ENCODE measurements at regions of chr18 and their contacts with region 1.

Region 1: GRCh38 chr18:22933206-22933957 is at the start of gene RBBP8:
- DNase-seq: peak; percentile 97
- H3K4me3 Mint-ChIP-seq: peak within 1 kb of the TSS; percentile 89
- H3K27ac Mint-ChIP-seq: peak within 1 kb of the TSS; percentile 96
- H3K4me1 Mint-ChIP-seq: peaks cover 21% of the 10 kb centered on the region
- H3K27me3 Mint-ChIP-seq: peaks cover 3% of the 10 kb centered on the region
- total RNA-seq, gene RBBP8: 97.8 TPM in 2 replicates

Region 2: DNA sequence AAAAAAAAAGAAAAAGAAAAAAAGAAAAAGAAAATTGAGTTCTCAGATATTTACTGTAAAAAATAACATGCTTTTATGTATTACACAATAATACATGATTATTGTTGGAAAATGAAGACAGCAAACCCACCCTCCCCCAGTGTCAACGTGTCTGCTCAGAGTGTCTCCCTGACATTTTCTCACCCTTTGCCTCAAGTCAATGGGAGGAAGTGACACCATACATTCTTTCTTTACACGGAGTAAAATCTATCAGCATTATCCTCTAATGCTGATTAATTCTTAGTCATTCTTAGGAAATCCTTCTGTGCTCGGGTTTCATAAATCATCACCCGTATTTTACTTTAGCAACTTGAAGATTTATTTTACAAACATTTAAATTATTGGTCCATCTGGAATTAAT is 547.7 kb before region 1 on chr18:
- intact Hi-C with region 1: no loop called
- DNase-seq: no peak
- H3K4me3 Mint-ChIP-seq: no peak overlapping the region
- H3K27ac Mint-ChIP-seq: no peak overlapping the region
- H3K4me1 Mint-ChIP-seq: no peaks in the 10 kb centered on the region
- H3K27me3 Mint-ChIP-seq: no peaks in the 10 kb centered on the region

Region 3: DNA sequence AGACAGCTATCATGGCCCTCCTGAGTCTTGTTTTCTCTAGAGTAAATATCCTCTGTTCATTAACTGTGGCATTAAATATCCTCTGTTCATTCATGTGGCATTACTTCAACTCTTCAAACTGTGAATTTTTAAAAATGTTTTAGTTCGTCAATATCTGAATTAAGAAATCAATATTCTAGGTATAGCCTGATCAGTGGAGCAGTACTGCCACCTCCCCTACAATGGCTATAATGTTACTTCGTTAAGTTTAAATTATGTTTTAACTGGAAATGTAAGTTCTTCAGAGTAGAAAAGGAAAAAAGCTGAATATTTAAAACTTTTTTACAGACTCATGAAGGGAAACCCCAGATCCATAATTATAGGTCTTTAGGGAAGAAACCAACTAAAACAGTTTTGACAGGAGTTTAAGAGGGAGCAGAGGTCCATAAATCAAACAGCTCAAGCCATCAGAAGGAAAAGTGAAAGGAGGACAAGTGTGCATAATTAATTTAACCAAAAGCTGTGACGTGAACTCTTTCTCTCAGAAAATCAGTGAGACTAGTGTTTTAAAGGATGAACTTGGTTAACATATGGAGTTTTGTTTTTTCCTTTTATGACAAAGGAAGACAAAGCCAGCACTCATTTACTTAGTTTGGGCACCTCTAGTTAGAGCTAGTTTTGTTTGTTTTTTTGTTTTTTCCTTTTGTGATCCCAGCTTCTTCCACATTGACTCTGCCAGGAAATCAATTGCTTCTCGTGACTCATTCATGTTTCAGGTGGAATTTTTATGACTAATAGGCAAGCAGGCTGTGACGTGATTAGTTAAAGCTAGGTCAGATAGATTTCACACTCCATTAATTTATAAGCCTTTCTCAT is 44.7 kb after region 1 on chr18:
- intact Hi-C with region 1: loop called (anchors 1 kb)
- DNase-seq: no peak
- H3K4me3 Mint-ChIP-seq: peak overlapping the region; percentile 0
- H3K27ac Mint-ChIP-seq: peak overlapping the region; percentile 61
- H3K4me1 Mint-ChIP-seq: peaks cover 20% of the 10 kb centered on the region
- H3K27me3 Mint-ChIP-seq: no peaks in the 10 kb centered on the region

Region 4: DNA sequence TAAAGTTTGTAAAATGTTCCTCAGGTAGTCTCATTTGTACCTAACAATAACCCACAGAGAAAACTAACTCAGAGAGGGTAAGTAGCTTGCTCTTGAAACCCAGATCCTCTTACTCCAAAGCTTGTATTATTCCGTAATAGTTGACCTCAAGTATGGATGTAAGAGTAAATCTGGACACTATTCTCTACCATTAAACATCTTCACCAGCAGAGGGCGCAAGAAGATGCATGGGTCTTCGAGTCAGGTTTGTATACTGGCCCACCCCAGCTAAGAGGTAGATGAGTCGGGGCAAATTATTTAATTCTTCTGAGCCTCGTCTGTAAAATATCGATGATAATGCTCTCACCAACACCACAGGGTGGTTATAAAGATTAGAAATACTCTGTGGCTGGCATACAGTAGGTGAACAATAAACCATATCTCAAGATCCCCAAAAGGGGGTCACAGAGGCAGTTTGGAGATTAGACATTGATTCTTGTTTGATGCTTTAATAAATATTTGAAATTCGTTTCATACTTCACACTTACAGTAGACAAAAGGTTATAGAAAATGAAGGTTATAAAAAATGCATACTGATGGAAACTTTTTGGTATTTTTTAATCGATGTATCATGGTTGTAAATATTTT is 198.4 kb after region 1 on chr18:
- intact Hi-C with region 1: loop called (anchors 5 kb)
- DNase-seq: peak; percentile 89
- H3K4me3 Mint-ChIP-seq: no peak overlapping the region
- H3K27ac Mint-ChIP-seq: no peak overlapping the region
- H3K4me1 Mint-ChIP-seq: peaks cover 13% of the 10 kb centered on the region
- H3K27me3 Mint-ChIP-seq: peaks cover 8% of the 10 kb centered on the region

Region 5: GRCh38 chr18:23377669-23378301 is 444.4 kb after region 1 on chr18:
- intact Hi-C with region 1: loop called (anchors 10 kb)
- DNase-seq: peak; percentile 67
- H3K4me3 Mint-ChIP-seq: peak overlapping the region; percentile 25
- H3K27ac Mint-ChIP-seq: peak overlapping the region; percentile 81
- H3K4me1 Mint-ChIP-seq: peaks cover 16% of the 10 kb centered on the region
- H3K27me3 Mint-ChIP-seq: no peaks in the 10 kb centered on the region

Region 6: DNA sequence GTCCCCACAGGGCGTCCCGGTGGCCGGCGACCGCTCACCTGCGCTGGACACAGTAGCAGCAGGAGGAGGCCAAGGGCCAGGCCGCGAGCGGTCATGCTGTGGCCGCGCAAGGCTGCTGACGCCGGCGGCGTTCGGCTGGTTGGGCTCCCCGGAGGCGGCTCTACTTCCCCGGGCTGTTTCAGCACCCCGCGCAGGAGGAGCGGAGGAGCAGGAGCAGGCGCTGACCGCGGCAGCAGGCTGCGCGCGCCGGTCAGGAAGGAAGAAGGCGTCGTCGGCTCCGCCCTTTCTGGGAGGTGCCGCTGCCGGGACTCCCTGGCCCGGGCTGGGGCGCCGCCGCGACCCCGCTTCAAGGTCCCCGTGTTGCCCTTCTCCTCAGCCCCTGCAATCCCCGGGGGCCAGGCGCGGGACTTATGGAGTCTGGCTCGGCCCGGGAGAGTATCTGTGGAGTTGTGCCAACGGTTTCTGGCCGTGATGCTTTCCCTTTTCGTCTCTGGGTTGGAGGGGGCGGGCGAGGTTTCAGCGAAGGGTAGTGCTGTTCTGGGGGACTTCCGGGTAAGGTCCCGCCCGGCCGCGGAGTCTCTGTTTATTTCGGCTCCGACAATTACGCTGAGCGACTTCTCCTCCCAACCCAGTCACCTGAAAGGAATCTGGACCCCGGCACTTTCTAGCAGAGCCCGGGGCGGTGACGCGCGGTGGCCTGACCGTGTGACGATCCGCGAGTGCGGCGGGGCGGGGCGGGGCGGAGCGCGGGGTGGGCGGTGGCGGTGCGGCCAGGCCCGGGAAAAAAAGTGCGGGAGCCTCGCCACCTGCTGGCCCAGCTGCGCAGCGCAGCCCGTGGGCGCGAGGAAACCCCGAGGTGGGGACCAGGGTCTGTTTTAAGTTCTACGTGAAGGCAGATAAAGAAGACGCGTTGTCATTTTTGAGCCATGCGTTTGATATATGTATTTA is 653.1 kb after region 1 on chr18 and contains the start of gene NPC1:
- intact Hi-C with region 1: loop called (anchors 5 kb)
- DNase-seq: peak; percentile 98
- H3K4me3 Mint-ChIP-seq: peak within 1 kb of the TSS; percentile 94
- H3K27ac Mint-ChIP-seq: peak within 1 kb of the TSS; percentile 96
- H3K4me1 Mint-ChIP-seq: peaks cover 37% of the 10 kb centered on the region
- H3K27me3 Mint-ChIP-seq: peaks cover 3% of the 10 kb centered on the region
- total RNA-seq, gene NPC1: 26.3 and 29.9 TPM in 2 replicates

Measured in activated CD4-positive, alpha-beta T cell treated with anti-CD3 and anti-CD28 coated beads, Interleukin-2, amount 10 ng/mL, durations not matched to agents 24 days and 14 days (primary cell).